ENCODE measurements at regions of chr21 and their contacts with region 1.

Region 1: GRCh38 chr21:18058731-18059398 is 185.8 kb upstream of the CHODL start:
- ATAC-seq: no peak
- H3K4me3 ChIP-seq: no peak overlapping the region
- H3K27ac ChIP-seq: no peak overlapping the region
- H3K4me1 ChIP-seq: no peaks in the 10 kb centered on the region

Region 2: GRCh38 chr21:17197996-17198395 is 860.9 kb before region 1 on chr21:
- in situ Hi-C with region 1: no loop called
- ATAC-seq: no peak
- H3K4me3 ChIP-seq: no peak overlapping the region
- H3K27ac ChIP-seq: no peak overlapping the region
- H3K4me1 ChIP-seq: no peaks in the 10 kb centered on the region

Region 3: DNA sequence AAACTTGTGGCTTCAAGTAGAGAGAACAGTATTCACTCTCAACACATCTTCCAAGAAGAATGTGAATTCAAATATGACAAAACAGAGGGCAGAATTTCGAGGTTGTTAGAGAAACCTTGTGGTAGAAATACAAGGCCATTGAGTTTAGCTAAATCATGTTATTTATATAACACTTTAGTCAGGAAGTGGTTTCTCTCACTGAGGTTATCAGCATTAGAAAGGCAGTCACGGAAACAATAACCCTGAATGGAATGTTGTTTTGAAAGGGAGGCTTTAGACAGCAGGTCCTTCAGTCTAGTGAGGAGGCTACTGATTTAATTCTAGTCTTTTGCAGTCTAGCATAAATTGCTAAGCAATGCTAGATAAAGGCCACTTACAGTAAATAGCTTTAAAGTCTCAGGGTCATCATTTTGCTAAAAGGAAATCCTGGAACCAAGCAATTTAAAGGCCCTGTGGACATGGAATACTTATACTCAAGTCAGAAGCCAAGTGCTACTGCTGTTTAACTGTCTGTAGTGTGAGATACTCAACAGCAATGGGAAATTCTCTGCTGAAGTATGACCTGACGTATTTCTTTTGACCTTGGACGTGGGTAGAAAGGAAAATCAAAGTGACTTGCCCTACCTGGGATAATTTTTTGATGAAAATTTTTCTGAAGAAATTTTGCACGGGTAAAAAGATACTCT is 96.8 kb after region 1 on chr21:
- in situ Hi-C with region 1: loop called in 1 of 9 experiments (anchors 25 kb)
- ATAC-seq: peak in 5 of 8 experiments; percentile 37 to 80 (median 70)
- H3K4me3 ChIP-seq: no peak overlapping the region
- H3K27ac ChIP-seq: peak overlapping the region in 1 of 2 donors; percentile 21
- H3K4me1 ChIP-seq: peaks cover 0 to 15% of the 10 kb centered on the region in 2 donors

Measured in motor neuron (in vitro differentiated cells).